ENCODE measurements at regions of chr1 and their contacts with region 1.

Region 1: DNA sequence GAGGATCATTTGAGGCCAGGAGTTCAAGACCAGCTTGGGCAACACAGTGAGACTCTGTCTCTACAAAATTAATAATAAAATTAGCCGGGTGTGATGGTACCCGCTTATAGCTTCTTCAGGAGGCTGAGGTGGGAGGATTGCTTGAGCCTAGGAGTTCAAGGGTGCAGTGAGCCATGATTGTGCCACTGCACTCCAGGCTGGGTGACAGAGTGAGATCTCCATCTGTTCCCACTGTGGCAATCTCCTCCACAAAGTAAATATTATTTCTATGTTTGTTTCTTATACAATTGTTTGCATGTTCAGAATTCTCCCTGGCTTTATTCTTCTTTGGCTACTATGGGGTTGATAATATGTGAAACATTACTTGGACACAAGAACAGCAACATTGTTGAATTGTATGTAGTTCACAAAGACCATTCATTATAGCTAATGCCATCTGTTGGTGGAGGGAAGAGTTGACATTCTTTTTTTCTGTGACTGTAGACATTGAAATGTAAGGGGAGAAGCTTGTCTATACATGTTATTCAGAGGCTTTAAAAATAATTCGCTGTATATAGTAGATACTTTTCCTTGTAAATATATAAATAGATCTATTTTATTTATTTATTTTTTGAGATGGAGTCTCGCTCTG is 47.8 kb upstream of the SRSF10 start:
- DNase-seq: peak; percentile 20
- ATAC-seq: peak; percentile 85
- H3K4me3 ChIP-seq: no peak overlapping the region
- H3K27ac ChIP-seq: no peak overlapping the region
- H3K4me1 ChIP-seq: no peaks in the 10 kb centered on the region
- H3K27me3 ChIP-seq: no peaks in the 10 kb centered on the region
- CTCF ChIP-seq: peak; percentile 54 to 60 (median 56); a peak in 5 of 6 replicates
- EP300 ChIP-seq: no peak
- POLR2A ChIP-seq: no peak
- RAD21 ChIP-seq: peak; percentile 78

Region 2: DNA sequence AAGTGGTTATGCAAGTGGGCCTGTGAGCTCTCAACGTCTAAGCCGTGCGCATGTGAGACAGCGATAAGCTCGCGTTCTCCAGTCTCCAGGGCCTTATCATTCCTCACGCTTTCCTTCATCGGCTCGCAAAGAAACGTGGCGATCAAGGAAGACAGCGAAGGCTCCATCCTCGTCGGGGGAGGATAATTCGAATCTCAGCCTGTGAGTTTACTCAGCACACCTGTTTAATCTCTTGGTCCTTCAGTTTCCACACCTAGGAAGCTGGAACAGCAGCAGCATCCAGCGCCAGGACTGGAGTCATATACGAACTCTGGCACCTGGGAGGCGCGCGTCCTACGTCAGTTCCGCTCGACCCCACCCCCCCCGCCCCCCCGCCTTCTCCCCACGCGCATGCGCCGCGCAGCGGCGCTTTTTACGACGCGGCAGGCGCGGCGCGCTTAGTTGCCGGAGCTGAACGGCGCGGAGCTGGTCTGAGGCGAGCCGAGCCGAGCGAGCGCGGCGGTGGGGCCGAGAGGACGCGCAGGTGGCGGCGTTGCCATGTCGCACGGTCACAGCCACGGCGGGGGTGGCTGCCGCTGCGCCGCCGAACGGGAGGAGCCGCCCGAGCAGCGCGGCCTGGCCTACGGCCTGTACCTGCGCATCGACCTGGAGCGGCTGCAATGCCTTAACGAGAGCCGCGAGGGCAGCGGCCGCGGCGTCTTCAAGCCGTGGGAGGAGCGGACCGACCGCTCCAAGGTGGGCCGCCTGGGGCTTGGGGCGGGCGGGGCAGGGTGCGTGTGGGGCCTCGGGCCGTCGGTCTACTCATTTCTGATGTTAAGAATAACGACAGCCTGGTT is 249.8 kb before region 1 on chr1 and contains the start of gene PITHD1:
- CTCF ChIA-PET with region 1: interaction called, 4 read pairs
- POLR2A ChIA-PET with region 1: no interaction called
- RAD21 ChIA-PET with region 1: no interaction called
- SMC1A ChIA-PET with region 1: no interaction called
- in situ Hi-C with region 1: no loop called
- intact Hi-C with region 1: loop called (anchors 10 kb)
- DNase-seq: peak; percentile 45
- ATAC-seq: peak; percentile 96
- H3K4me3 ChIP-seq: peak within 1 kb of the TSS; percentile 99
- H3K27ac ChIP-seq: peak within 1 kb of the TSS; percentile 82
- H3K4me1 ChIP-seq: peaks cover 10% of the 10 kb centered on the region; the same call in 1 of the 2 replicates
- H3K27me3 ChIP-seq: no peaks in the 10 kb centered on the region
- CTCF ChIP-seq: no peak
- EP300 ChIP-seq: no peak
- POLR2A ChIP-seq: peak; percentile 98
- RAD21 ChIP-seq: no peak
- polyA plus RNA-seq, gene PITHD1: 23.7 to 43.3 TPM

Region 3: GRCh38 chr1:23959041-23959460 is 68.9 kb before region 1 on chr1:
- CTCF ChIA-PET with region 1: interaction called, 21 read pairs
- POLR2A ChIA-PET with region 1: interaction called, 12 read pairs
- RAD21 ChIA-PET with region 1: interaction called, 29 read pairs
- SMC1A ChIA-PET with region 1: interaction called, 77 read pairs
- in situ Hi-C with region 1: no loop called
- intact Hi-C with region 1: loop called (anchors 5 kb)
- DNase-seq: peak; percentile 96
- ATAC-seq: peak; percentile 87
- H3K4me3 ChIP-seq: peak overlapping the region; percentile 87
- H3K27ac ChIP-seq: peak overlapping the region; percentile 97
- H3K4me1 ChIP-seq: peaks cover 31% of the 10 kb centered on the region
- H3K27me3 ChIP-seq: no peaks in the 10 kb centered on the region
- CTCF ChIP-seq: peak in 2 of 3 experiments; percentile 19 to 67; a peak in 3 of 6 replicates
- EP300 ChIP-seq: peak in 1 of 2 experiments; percentile 50; a peak in 1 of 4 replicates
- POLR2A ChIP-seq: peak; percentile 68
- RAD21 ChIP-seq: peak; percentile 41

Region 4: GRCh38 chr1:23979878-23980724 is 47.9 kb before region 1 on chr1 and contains the start of gene SRSF10:
- CTCF ChIA-PET with region 1: interaction called, 22 read pairs
- POLR2A ChIA-PET with region 1: interaction called, 4 read pairs
- RAD21 ChIA-PET with region 1: interaction called, 8 read pairs
- SMC1A ChIA-PET with region 1: interaction called, 13 read pairs
- in situ Hi-C with region 1: no loop called
- intact Hi-C with region 1: loop called (anchors 1 kb)
- DNase-seq: peak; percentile 98
- ATAC-seq: peak; percentile 87
- H3K4me3 ChIP-seq: peak within 1 kb of the TSS; percentile 91
- H3K27ac ChIP-seq: peak within 1 kb of the TSS; percentile 98
- H3K4me1 ChIP-seq: peaks cover 14% of the 10 kb centered on the region
- H3K27me3 ChIP-seq: no peaks in the 10 kb centered on the region
- CTCF ChIP-seq: peak; percentile 20 to 35 (median 28); a peak in 4 of 6 replicates
- EP300 ChIP-seq: no peak
- POLR2A ChIP-seq: peak; percentile 100
- RAD21 ChIP-seq: no peak
- polyA plus RNA-seq, gene SRSF10: 166 to 187 TPM

Region 5: DNA sequence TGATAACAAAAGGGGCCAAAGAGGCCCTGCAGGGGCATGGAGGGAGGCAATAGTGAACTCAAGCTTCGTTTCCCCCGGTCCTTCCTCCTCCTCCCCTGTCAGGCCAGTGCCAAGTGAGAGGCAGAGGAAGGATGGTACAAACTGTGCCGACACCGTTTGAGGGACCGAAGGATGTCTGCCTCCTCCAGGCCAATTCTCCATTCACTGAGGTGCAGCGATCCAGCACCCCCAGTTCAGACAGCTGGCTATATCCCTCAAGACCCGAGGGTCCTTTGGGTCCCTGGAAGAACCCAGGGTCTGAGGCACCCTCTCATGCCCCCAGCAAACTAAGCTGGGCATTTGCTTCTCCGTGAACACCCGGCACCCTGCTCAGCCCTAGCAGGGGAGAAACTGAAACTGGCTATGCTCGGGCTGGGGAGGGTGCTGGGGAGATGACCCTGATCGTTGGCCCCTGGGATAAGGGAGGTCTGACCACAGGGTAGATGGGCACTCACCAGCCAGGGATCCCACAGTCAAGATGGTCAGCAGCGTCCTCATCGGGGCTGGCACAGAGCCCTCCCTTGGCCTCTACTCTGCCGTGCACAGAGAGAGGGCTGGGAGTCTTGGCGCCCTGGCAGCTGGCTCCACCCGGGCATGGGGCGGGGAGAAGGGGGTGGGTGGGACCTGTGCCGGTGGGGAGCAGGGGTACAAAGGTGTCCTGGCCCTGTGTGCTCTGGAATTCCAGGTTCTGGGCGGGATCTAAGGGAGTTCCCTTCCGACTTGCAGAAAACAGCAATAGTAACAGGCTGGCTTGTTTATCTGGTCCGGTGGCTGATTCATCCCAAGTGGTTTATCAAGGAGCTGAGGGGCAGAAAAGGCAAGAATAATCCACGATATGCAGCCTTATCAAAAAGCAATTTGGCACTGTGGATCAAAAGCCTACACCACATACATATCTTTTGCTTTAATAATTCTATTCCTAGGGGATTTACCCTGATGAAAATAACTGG is 114.9 kb after region 1 on chr1 and contains the start of gene IL22RA1:
- CTCF ChIA-PET with region 1: no interaction called
- POLR2A ChIA-PET with region 1: no interaction called
- RAD21 ChIA-PET with region 1: no interaction called
- SMC1A ChIA-PET with region 1: no interaction called
- in situ Hi-C with region 1: no loop called
- intact Hi-C with region 1: no loop called
- DNase-seq: no peak
- ATAC-seq: no peak
- H3K4me3 ChIP-seq: no peak within 1 kb of the TSS
- H3K27ac ChIP-seq: no peak within 1 kb of the TSS
- H3K4me1 ChIP-seq: no peaks in the 10 kb centered on the region
- H3K27me3 ChIP-seq: peaks cover 2 to 9% of the 10 kb centered on the region in 2 experiments; a peak in 2 of 4 replicates
- CTCF ChIP-seq: no peak
- EP300 ChIP-seq: no peak
- POLR2A ChIP-seq: no peak
- RAD21 ChIP-seq: no peak
- polyA plus RNA-seq, gene IL22RA1: not detected